Mucosa of descending colon (tissue), 3 donors: ENCODE measurements at regions of chr4 and their contacts with region 1.

Region 1: GRCh38 chr4:74311696-74312313 is 3.5 kb downstream of the EPGN start:
- DNase-seq: peak in 1 of 3 donors; percentile 82
- ATAC-seq: peak; percentile 45
- H3K4me3 ChIP-seq: no peak overlapping the region
- H3K4me1 ChIP-seq: no peaks in the 10 kb centered on the region
- CTCF ChIP-seq: peak; percentile 16

Region 2: DNA sequence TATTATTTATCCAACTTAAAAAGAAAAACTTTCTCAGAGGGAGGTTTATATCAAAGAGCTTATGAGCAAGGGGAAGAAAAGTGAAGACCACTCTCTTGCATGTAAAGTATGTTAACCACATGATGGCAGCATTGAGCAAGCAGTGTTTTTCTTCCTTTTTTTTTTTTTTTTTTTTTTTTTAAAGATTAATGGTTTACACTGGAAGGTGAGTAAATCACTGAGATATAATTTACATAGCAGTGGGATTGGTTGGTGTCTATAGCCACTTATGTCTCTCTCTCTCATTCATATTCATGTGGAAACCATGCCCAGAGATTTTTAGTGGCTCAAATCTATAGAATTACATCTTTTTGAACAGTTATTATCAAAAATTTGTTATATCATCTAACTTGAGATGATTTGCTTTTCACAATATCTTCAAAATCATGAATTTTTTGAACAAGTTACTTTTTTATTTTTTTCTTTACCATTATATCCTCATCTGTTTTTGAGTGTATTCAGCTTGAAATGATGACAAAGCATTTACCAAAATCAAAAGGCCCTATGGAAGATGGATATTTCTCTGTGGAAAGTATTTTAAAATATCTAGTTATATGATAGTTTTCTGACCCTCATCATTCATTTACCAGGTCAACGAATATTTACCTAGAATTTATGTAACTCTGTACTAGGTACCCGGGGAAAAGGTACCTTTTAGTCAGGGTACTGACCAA is 122.3 kb before region 1 on chr4:
- intact Hi-C with region 1: loop called in 1 of 2 experiments (anchors 5 kb)
- DNase-seq: peak in 1 of 3 donors; percentile 23
- ATAC-seq: peak; percentile 78
- H3K4me3 ChIP-seq: no peak overlapping the region
- H3K4me1 ChIP-seq: no peaks in the 10 kb centered on the region
- CTCF ChIP-seq: peak; percentile 37

Region 3: GRCh38 chr4:74228691-74229640 is 82.8 kb before region 1 on chr4:
- intact Hi-C with region 1: loop called in 1 of 2 experiments (anchors 10 kb)
- DNase-seq: peak; percentile 63 to 87 (median 78)
- ATAC-seq: peak; percentile 59
- H3K4me3 ChIP-seq: no peak overlapping the region
- H3K4me1 ChIP-seq: peaks cover 9% of the 10 kb centered on the region
- CTCF ChIP-seq: peak; percentile 72

Region 4: DNA sequence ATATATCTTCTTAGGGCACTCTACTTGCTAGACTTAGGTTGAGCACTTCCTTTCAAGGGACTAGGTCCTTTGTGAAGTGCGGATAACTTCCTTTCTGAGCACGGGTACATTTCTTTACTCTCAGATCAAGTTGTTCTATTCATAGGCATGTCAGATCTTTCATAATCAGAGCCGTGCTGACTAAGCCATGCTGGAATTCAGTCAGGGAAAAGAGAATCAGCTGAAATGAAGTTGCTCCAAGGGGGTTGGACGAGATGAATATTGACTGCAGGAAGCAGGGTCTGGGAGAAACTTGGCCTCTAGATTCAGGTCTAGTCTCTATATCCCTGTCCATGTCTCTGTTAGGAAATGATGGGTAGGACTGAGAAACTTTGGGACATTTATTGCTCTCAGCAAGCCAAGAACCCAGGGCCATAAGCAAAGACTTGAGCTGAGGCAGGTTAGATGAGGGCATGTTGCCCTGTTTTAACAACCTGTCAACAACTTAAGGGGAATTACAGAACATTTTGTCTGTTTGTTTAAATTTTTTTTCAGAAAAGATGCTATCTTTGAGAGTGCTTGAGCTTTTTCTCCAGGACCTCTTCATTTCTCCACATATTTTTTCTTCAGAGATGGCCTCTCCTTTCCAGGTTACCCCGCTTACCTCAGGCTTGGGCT is 161.5 kb after region 1 on chr4:
- intact Hi-C with region 1: no loop called
- DNase-seq: no peak
- ATAC-seq: no peak
- H3K4me3 ChIP-seq: no peak overlapping the region
- H3K4me1 ChIP-seq: peaks cover 3% of the 10 kb centered on the region
- CTCF ChIP-seq: no peak

Region 5: GRCh38 chr4:74529284-74530041 is 217.7 kb after region 1 on chr4:
- intact Hi-C with region 1: no loop called
- DNase-seq: peak in 2 of 3 donors; percentile 32 to 61
- ATAC-seq: peak; percentile 89
- H3K4me3 ChIP-seq: no peak overlapping the region
- H3K4me1 ChIP-seq: peaks cover 10% of the 10 kb centered on the region
- CTCF ChIP-seq: no peak